ENCODE measurements at regions of chr2 and their contacts with region 1.

Region 1: GRCh38 chr2:239267288-239267951 is 133.4 kb downstream of the HDAC4 start:
- DNase-seq: peak; percentile 74 to 96 (median 94)
- ATAC-seq: peak; percentile 88
- H3K4me3 ChIP-seq: peak overlapping the region; percentile 85
- H3K4me3 Mint-ChIP-seq: peak overlapping the region; percentile 90 to 99 (median 95)
- H3K27ac ChIP-seq: peak overlapping the region; percentile 74
- H3K27ac Mint-ChIP-seq: peak overlapping the region; percentile 88 to 99 (median 98)
- H3K4me1 ChIP-seq: peaks cover 57 to 74% of the 10 kb centered on the region in 2 donors
- H3K4me1 Mint-ChIP-seq: peaks cover 55 to 98% (median 85%) of the 10 kb centered on the region in 7 donors
- H3K27me3 ChIP-seq: no peaks in the 10 kb centered on the region
- H3K27me3 Mint-ChIP-seq: peaks cover 0 to 4% (median 0%) of the 10 kb centered on the region in 5 donors

Region 2: DNA sequence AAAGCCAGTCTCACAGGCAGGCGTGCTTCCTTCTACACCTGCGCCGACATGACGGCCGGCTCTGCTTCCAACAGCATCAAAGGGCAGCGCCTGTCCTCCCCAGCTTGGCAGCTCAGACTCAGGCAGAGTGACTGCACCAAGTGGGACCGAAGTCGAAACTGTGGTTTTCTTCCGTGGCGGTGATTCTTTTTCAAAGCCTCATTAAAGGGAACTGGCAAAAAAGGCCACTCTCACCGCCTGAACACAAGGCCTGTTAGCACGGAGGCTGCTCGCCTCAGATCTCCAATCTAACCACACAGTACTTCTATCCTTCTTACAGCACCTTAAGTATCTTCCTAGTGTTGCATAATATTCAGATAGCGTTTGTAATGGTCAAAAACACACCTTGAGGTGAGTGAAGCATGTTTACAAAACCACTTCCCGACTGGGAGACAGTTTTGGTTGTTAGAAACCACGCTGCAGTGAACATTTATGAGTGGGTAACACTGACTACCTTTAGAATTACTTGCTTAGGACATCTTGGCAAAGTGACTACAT is 103.0 kb before region 1 on chr2:
- CTCF ChIA-PET with region 1: no interaction called
- POLR2A ChIA-PET with region 1: no interaction called
- intact Hi-C with region 1: loop called in 1 of 2 experiments (anchors 1 kb)
- DNase-seq: peak in 7 of 9 donors; percentile 11 to 45 (median 29)
- ATAC-seq: peak; percentile 60
- H3K4me3 ChIP-seq: peak overlapping the region; percentile 11
- H3K4me3 Mint-ChIP-seq: peak overlapping the region; percentile 39 to 73 (median 62)
- H3K27ac ChIP-seq: peak overlapping the region; percentile 36
- H3K27ac Mint-ChIP-seq: peak overlapping the region; percentile 57 to 93 (median 85)
- H3K4me1 ChIP-seq: peaks cover 0 to 5% of the 10 kb centered on the region in 2 donors
- H3K4me1 Mint-ChIP-seq: peaks cover 16 to 26% (median 21%) of the 10 kb centered on the region in 7 donors
- H3K27me3 ChIP-seq: no peaks in the 10 kb centered on the region
- H3K27me3 Mint-ChIP-seq: no peaks in the 10 kb centered on the region

Region 3: DNA sequence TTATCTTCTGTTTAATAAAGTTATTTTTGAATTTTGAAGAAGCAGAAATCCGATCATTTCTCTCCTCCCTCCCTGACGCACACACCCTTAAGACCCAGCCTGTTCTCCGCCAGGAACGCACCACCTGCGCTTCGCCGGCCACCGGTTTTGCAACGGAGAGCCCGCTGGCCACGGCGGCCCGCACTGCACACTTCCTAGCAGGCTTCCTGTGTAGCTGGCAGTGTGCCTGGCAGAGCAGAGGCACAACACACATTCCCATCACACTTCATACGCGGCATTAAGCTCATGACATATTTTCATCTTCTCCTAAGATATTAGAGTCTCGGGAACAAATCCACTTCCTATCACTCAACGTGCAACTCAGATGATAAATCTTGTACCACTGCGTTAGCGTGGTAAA is 14.6 kb before region 1 on chr2:
- CTCF ChIA-PET with region 1: interaction called, 7 read pairs
- POLR2A ChIA-PET with region 1: interaction called, 10 read pairs
- intact Hi-C with region 1: loop called in 1 of 2 experiments (anchors 1 kb)
- DNase-seq: no peak
- ATAC-seq: peak; percentile 71
- H3K4me3 ChIP-seq: peak overlapping the region; percentile 18
- H3K4me3 Mint-ChIP-seq: peak overlapping the region in 9 of 10 donors; percentile 82 to 93 (median 87)
- H3K27ac ChIP-seq: peak overlapping the region; percentile 23
- H3K27ac Mint-ChIP-seq: peak overlapping the region in 8 of 9 donors; percentile 61 to 92 (median 81)
- H3K4me1 ChIP-seq: peaks cover 5 to 55% of the 10 kb centered on the region in 2 donors
- H3K4me1 Mint-ChIP-seq: peaks cover 47 to 92% (median 74%) of the 10 kb centered on the region in 7 donors
- H3K27me3 ChIP-seq: no peaks in the 10 kb centered on the region
- H3K27me3 Mint-ChIP-seq: peaks cover 0 to 4% (median 0%) of the 10 kb centered on the region in 5 donors

Region 4: DNA sequence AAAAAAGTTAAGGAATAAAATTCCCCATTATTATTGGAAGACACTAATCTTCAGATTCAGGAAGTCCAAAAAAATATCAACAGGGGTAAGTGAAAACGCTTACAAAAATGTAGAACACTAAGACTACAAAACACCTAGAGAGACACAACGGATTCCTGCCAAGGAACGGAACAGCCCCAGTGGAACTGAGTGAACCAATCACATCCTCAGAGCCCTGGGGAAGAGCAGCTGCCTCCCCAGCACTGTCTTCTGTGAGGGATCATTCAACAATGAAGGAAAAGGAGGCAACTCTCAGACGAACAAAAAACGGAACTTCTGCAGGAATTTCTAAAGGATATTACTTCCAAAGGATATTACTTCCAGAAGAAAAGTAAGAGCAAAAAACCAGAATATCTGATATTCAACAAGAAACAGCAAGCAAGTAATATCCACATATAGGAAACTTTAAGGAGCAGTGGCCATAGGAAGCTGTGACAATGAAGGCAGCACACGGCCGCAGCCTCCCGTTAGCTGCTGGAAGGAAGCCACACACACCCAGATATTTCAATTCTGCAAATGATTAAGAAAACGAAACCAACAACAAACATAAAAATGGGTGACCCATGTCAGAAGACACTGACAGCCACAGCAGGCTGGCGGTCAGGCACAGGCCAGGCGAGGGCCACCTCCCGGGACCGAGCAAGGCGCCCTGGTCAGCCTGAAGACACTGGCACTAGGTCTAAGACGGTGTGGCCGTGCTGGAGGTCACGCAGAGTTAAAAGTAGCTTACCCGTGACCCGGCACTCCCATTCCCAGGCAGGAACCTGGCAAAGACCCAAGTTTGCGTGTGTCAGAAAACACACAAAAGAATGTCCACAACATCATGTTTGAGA is 51.6 kb after region 1 on chr2:
- CTCF ChIA-PET with region 1: interaction called, 5 read pairs
- POLR2A ChIA-PET with region 1: interaction called, 7 read pairs
- intact Hi-C with region 1: loop called in 1 of 2 experiments (anchors 1 kb)
- DNase-seq: peak in 4 of 9 donors; percentile 6 to 31 (median 28)
- ATAC-seq: peak; percentile 5
- H3K4me3 ChIP-seq: no peak overlapping the region
- H3K4me3 Mint-ChIP-seq: peak overlapping the region; percentile 78 to 90 (median 88)
- H3K27ac ChIP-seq: peak overlapping the region; percentile 64
- H3K27ac Mint-ChIP-seq: peak overlapping the region; percentile 93 to 100 (median 98)
- H3K4me1 ChIP-seq: peaks cover 31 to 41% of the 10 kb centered on the region in 2 donors
- H3K4me1 Mint-ChIP-seq: peaks cover 34 to 91% (median 78%) of the 10 kb centered on the region in 7 donors
- H3K27me3 ChIP-seq: no peaks in the 10 kb centered on the region
- H3K27me3 Mint-ChIP-seq: no peaks in the 10 kb centered on the region

Region 5: GRCh38 chr2:239380831-239381708 is 113.7 kb after region 1 on chr2:
- CTCF ChIA-PET with region 1: interaction called, 7 read pairs
- POLR2A ChIA-PET with region 1: interaction called, 14 read pairs
- intact Hi-C with region 1: loop called (anchors 5 kb)
- DNase-seq: peak; percentile 34 to 87 (median 81)
- ATAC-seq: peak; percentile 91
- H3K4me3 ChIP-seq: peak overlapping the region; percentile 20
- H3K4me3 Mint-ChIP-seq: peak overlapping the region; percentile 69 to 93 (median 88)
- H3K27ac ChIP-seq: peak overlapping the region; percentile 67
- H3K27ac Mint-ChIP-seq: peak overlapping the region; percentile 90 to 99 (median 96)
- H3K4me1 ChIP-seq: peaks cover 0 to 15% of the 10 kb centered on the region in 2 donors
- H3K4me1 Mint-ChIP-seq: peaks cover 21 to 47% (median 35%) of the 10 kb centered on the region in 7 donors
- H3K27me3 ChIP-seq: no peaks in the 10 kb centered on the region
- H3K27me3 Mint-ChIP-seq: no peaks in the 10 kb centered on the region

Region 6: DNA sequence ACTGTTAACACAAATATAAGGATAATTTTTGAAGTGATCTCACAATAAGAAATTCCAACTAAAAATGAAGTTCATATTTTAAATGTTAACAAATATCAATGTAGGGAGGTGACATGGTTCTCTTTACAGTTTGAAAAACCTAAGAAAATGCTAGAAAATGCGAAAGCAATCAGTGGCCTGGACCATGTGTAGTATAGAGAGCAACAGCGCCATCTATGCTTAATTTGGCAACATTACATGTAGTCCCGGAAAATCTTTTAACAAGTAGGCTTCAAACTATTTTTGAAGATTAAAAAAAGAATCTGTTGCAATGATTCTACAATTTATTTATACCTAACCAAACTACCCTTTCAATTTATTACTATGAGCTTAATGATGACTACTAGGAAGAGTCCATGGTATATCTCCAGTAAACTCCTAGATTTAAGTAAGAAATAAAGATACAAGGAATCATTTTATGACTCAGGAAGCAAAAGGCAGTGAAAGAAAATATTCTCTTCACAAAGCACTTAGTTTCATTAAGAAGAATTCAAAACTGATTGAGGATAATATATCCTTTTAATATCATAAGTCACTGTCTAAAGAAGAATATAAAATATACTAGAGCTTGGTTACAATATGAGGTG is 724.4 kb after region 1 on chr2:
- CTCF ChIA-PET with region 1: no interaction called
- POLR2A ChIA-PET with region 1: no interaction called
- intact Hi-C with region 1: loop called in 1 of 2 experiments (anchors 5 kb)
- DNase-seq: peak in 6 of 9 donors; percentile 12 to 54 (median 42)
- ATAC-seq: peak; percentile 86
- H3K4me3 ChIP-seq: no peak overlapping the region
- H3K4me3 Mint-ChIP-seq: no peak overlapping the region
- H3K27ac ChIP-seq: no peak overlapping the region
- H3K27ac Mint-ChIP-seq: no peak overlapping the region
- H3K4me1 ChIP-seq: no peaks in the 10 kb centered on the region
- H3K4me1 Mint-ChIP-seq: peaks cover 0 to 5% (median 0%) of the 10 kb centered on the region in 7 donors
- H3K27me3 ChIP-seq: no peaks in the 10 kb centered on the region
- H3K27me3 Mint-ChIP-seq: no peaks in the 10 kb centered on the region